ENCODE measurements at regions of chr14 and their contacts with region 1.

Region 1: GRCh38 chr14:92106143-92106926 is at the start of gene ATXN3:
- H3K4me3 ChIP-seq: peak within 1 kb of the TSS; percentile 92
- H3K27ac ChIP-seq: peak within 1 kb of the TSS; percentile 79
- H3K4me1 ChIP-seq: 0 out of 2 replicates have a peak, but pooled peaks cover 3% of the 10 kb centered on the region
- CTCF ChIP-seq: peak; percentile 70

Region 2: GRCh38 chr14:92039719-92040430 is 66.5 kb before region 1 on chr14 and contains the start of gene TRIP11:
- CTCF ChIA-PET with region 1: interaction called, 7 read pairs
- POLR2A ChIA-PET with region 1: interaction called, 26 read pairs
- H3K4me3 ChIP-seq: peak within 1 kb of the TSS; percentile 82
- H3K27ac ChIP-seq: peak within 1 kb of the TSS; percentile 97
- H3K4me1 ChIP-seq: peaks cover 12% of the 10 kb centered on the region; the same call in 1 of the 2 replicates
- CTCF ChIP-seq: no peak; the same call in 1 of the 2 replicates

Region 3: GRCh38 chr14:92121670-92122350 is 15.5 kb after region 1 on chr14 and contains the starts of genes CPSF2 and NDUFB1:
- CTCF ChIA-PET with region 1: interaction called, 35 read pairs
- POLR2A ChIA-PET with region 1: interaction called, 51 read pairs
- H3K4me3 ChIP-seq: peak within 1 kb of the TSS; percentile 88
- H3K27ac ChIP-seq: peak within 1 kb of the TSS; percentile 97
- H3K4me1 ChIP-seq: no peaks in the 10 kb centered on the region
- CTCF ChIP-seq: peak; percentile 25; the same call in 1 of the 2 replicates

Region 4: GRCh38 chr14:92259613-92260357 is 153.4 kb after region 1 on chr14:
- CTCF ChIA-PET with region 1: no interaction called
- POLR2A ChIA-PET with region 1: no interaction called
- H3K4me3 ChIP-seq: no peak overlapping the region
- H3K27ac ChIP-seq: no peak overlapping the region
- H3K4me1 ChIP-seq: no peaks in the 10 kb centered on the region
- CTCF ChIP-seq: no peak

Region 5: GRCh38 chr14:92292673-92293072 is 186.3 kb after region 1 on chr14:
- CTCF ChIA-PET with region 1: no interaction called
- POLR2A ChIA-PET with region 1: no interaction called
- H3K4me3 ChIP-seq: no peak overlapping the region
- H3K27ac ChIP-seq: no peak overlapping the region
- H3K4me1 ChIP-seq: no peaks in the 10 kb centered on the region
- CTCF ChIP-seq: no peak

Measured in HEK293 (cell line).